GM13977 (cell line): ENCODE measurements at regions of chr19 and their contacts with region 1.

Region 1: GRCh38 chr19:14073261-14073924 is 807 bp downstream of the MISP3 start:
- DNase-seq: peak; percentile 92
- CTCF ChIP-seq: peak; percentile 88

Region 2: GRCh38 chr19:13588957-13589833 is 484.2 kb before region 1 on chr19:
- in situ Hi-C with region 1: loop called (anchors 25 kb)
- DNase-seq: peak; percentile 83
- CTCF ChIP-seq: peak; percentile 96

Region 3: GRCh38 chr19:13872695-13873389 is 200.6 kb before region 1 on chr19:
- in situ Hi-C with region 1: loop called (anchors 10 kb)
- DNase-seq: peak; percentile 83
- CTCF ChIP-seq: peak; percentile 54

Region 4: GRCh38 chr19:13986348-13986904 is 87.0 kb before region 1 on chr19:
- in situ Hi-C with region 1: no loop called
- DNase-seq: peak; percentile 99
- CTCF ChIP-seq: no peak